Activated T-helper 1 cell treated with anti-CD3 and anti-CD28 coated beads, Interleukin-12 subunit alpha, Interleukin-12 subunit beta, Interleukin-2, Interleukin-4 antibody, amounts not matched to agents 30 ng/mL and 10 ng/mL and 1 ng/mL, durations not matched to agents 14 hours and 24 hours and 36 hours (primary cell): ENCODE measurements at regions of chr11 and their contacts with region 1.

Region 1: DNA sequence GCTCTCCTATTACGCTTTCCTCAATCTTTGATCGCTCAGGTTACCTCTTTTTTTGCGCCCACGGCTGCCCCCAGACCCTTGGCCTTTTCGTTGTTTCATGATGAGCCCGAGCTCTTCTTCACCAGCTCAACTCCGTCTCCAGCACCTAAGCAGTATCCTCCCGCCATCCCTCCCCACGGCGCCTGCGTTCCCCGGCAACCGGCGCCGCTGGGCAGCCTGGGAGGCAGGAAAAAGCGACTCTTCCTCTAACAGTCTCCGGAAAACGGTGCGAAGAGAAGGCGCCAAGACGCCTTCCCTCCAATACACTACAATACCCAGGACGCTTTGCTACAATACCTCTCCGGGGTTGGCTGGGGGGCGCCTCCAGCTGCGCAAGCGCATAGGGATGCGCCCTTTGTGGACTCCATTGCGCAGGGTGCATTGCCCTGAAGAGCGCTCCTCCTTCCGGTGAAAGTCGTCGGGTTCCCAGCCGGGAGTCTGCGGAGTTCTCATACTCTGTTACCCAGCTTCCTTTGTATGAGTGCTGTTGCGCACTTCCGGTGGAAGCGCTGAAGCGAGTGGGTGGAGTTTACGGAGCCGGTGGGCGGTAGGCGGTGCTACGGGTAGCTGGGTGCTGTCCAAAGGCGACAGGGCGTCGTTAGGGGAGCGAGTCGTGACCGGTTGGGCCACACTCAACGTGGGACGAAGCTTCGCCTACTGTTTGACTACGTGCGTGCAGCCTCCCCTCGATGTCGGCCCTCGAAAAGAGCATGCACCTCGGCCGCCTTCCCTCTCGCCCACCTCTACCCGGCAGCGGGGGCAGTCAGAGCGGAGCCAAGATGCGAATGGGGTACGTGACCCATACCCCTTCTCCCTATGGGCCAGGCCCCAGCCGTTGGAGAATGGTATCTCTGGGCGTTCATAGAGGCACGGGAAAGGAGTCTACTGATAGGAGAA is at the starts of genes C2CD3 and PPME1:
- DNase-seq: peak; percentile 99
- H3K4me3 Mint-ChIP-seq: no peak within 1 kb of the TSS
- H3K27ac Mint-ChIP-seq: no peak within 1 kb of the TSS
- H3K4me1 Mint-ChIP-seq: peaks cover 11% of the 10 kb centered on the region
- H3K27me3 Mint-ChIP-seq: no peaks in the 10 kb centered on the region
- total RNA-seq, gene C2CD3: 46.5 and 49.5 TPM in 2 replicates
- total RNA-seq, gene PPME1: 64.8 and 68.1 TPM in 2 replicates

Region 2: GRCh38 chr11:73779084-73779902 is 391.7 kb before region 1 on chr11:
- intact Hi-C with region 1: loop called (anchors 1 kb)
- DNase-seq: peak; percentile 97
- H3K4me3 Mint-ChIP-seq: peak overlapping the region; percentile 90
- H3K27ac Mint-ChIP-seq: peak overlapping the region; percentile 99
- H3K4me1 Mint-ChIP-seq: peaks cover 10% of the 10 kb centered on the region
- H3K27me3 Mint-ChIP-seq: no peaks in the 10 kb centered on the region

Region 3: DNA sequence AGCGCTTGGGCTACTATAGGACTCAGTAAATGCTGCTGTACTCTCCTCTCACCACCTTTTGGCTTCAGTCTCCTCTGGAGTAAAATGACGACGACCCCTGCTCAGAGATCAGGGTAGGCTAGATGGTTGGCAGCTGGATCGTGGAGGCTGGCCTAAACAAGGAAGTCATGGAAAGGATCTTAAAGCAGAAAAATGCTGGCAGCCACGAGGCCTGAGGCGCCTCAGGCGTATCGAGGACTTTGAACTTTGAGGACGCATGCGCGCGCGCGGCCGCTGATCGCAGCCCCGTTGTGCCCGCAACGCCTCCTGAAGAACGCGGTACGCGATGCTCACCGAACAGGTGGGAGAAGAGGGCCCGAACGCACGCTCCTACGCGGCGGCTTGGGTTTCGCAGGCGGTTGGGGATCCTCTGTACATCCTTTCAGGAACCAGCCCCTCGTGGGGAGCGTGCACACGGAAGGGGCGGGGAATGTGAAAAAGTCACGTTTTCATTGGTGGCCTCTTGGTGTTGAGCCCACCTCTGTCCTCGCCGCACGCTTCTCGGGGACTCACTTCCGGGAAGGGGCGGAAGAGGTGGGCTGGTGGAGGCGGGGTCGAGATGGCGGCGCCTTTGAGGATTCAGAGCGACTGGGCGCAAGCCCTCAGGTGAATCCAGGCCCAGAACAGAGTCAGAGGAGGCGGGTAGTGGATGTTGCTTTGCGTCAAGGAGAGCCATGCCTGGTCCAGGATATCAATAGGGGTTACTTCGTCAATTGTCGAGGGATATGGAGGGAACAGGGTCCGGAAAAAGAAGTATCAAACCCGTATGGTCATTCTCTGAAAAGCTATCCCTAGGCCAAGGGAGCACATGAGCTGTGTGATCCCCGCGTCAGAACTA is 294.3 kb before region 1 on chr11 and contains the starts of genes COA4 and PAAF1:
- intact Hi-C with region 1: loop called (anchors 1 kb)
- DNase-seq: peak; percentile 92
- H3K4me3 Mint-ChIP-seq: peak within 1 kb of the TSS; percentile 93
- H3K27ac Mint-ChIP-seq: peak within 1 kb of the TSS; percentile 100
- H3K4me1 Mint-ChIP-seq: peaks cover 30% of the 10 kb centered on the region
- H3K27me3 Mint-ChIP-seq: no peaks in the 10 kb centered on the region
- total RNA-seq, gene COA4: 99.1 and 102 TPM in 2 replicates
- total RNA-seq, gene PAAF1: 22.4 and 25.0 TPM in 2 replicates

Region 4: GRCh38 chr11:73982969-73983740 is 187.8 kb before region 1 on chr11:
- intact Hi-C with region 1: loop called (anchors 1 kb)
- DNase-seq: peak; percentile 94
- H3K4me3 Mint-ChIP-seq: peak overlapping the region; percentile 100
- H3K27ac Mint-ChIP-seq: peak overlapping the region; percentile 99
- H3K4me1 Mint-ChIP-seq: peaks cover 55% of the 10 kb centered on the region
- H3K27me3 Mint-ChIP-seq: no peaks in the 10 kb centered on the region

Region 5: GRCh38 chr11:74492974-74493790 is 322.2 kb after region 1 on chr11 and contains the start of gene LIPT2:
- intact Hi-C with region 1: loop called (anchors 1 kb)
- DNase-seq: peak; percentile 96
- H3K4me3 Mint-ChIP-seq: peak within 1 kb of the TSS; percentile 86
- H3K27ac Mint-ChIP-seq: peak within 1 kb of the TSS; percentile 83
- H3K4me1 Mint-ChIP-seq: peaks cover 21% of the 10 kb centered on the region
- H3K27me3 Mint-ChIP-seq: peaks cover 8% of the 10 kb centered on the region
- total RNA-seq, gene LIPT2: 2.7 and 3.4 TPM in 2 replicates